Right cardiac atrium (tissue), 5 donors: ENCODE measurements at regions of chr4 and their contacts with region 1.

Region 1: DNA sequence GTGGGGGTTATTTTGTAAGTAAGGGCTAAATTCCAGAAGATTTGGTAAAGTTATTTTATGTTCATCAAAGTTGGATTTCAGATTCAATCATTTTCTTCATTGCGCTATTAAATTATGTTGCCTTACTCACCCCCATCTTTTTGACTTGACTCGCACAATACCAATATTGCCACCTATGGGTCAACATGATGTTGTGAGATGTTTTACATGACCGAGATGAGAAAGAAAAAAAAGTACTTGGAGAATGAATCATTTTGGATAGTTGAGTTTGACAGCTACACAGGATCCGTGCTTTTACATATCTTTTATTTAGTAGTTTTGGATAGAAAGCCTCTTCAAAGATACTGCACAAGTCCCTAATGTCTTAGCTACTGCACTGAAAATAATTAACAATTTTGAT is 224.2 kb upstream of the EMCN start:
- DNase-seq: no peak
- ATAC-seq: no peak
- H3K4me3 ChIP-seq: no peak overlapping the region
- H3K27ac ChIP-seq: no peak overlapping the region
- H3K4me1 ChIP-seq: no peaks in the 10 kb centered on the region
- H3K27me3 ChIP-seq: no peaks in the 10 kb centered on the region

Region 2: DNA sequence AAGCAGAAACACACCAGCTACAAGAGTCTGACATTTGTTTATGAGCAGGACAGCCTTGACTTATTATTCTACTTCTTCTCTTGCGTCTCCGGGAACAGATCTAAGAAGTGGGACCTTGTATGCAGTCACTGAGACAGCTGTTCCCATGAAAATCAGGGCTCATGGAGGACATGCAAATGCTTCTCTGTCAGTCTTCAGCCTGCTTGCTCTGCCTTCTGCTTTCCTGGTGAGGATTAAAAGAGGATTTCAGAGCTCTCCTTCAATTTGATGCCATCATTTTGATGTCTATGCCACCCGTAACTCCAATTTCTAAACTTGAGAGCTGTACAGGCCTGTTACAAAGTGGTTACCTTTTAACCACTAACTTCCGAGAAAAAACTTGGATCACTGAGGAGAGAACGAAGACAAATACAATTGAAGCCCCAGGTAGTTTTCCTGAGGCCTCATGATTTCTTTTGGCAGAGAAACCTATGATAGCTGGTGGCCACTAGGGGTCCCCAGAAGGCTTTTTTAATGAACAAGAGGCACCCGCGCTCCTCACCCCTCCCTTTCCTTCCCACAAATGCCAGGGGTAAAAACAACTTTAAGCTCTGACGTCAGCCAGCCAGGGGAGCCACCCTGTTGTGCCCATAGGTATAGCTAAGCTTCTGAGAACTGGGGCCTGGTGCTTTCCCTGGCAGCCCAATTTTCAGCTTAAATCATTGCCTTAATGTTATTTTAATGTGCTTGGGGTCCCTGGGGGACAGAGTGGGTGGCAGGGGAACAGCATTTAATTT is 648.8 kb before region 1 on chr4:
- intact Hi-C with region 1: loop called in 1 of 4 experiments (anchors 10 kb)
- DNase-seq: peak; percentile 83 to 91 (median 83)
- ATAC-seq: peak; percentile 91 to 95
- H3K4me3 ChIP-seq: no peak overlapping the region
- H3K27ac ChIP-seq: no peak overlapping the region
- H3K4me1 ChIP-seq: peaks cover 2% of the 10 kb centered on the region
- H3K27me3 ChIP-seq: no peaks in the 10 kb centered on the region

Region 3: DNA sequence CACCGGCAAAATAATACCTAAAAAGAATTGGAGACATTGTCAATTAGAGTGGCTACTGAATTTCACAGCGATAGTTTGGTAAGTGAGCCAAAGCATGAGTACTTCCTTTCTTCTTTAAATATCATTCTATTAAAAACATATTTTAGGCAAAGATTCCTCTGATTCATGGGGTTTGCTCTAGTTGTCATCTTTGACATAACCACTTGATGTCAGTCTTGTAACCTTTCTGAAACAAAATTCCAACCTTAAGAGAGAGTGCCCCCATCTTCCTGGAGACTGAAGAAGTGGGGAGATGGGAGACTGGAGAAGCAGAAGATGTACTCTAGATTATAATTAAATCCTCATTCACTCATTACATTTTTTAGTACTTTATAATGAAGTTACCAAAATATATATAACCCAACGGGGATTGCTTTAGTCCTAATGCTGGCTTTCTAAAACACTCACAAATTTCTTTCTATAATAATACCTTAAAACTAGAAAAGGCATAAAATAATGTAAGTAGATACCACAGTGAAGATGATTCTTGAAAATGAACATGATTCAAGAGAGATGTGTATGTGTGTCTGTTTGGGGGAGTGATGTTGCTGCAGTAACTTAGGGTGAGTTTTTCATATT is 320.6 kb before region 1 on chr4:
- intact Hi-C with region 1: loop called in 2 of 4 experiments (anchors 5 to 10 kb)
- DNase-seq: no peak
- ATAC-seq: peak; percentile 56 to 73
- H3K4me3 ChIP-seq: no peak overlapping the region
- H3K27ac ChIP-seq: no peak overlapping the region
- H3K4me1 ChIP-seq: no peaks in the 10 kb centered on the region
- H3K27me3 ChIP-seq: no peaks in the 10 kb centered on the region

Region 4: GRCh38 chr4:100517864-100518341 is 224.1 kb before region 1 on chr4 and contains the start of gene EMCN:
- intact Hi-C with region 1: loop called in 1 of 4 experiments (anchors 5 kb)
- DNase-seq: peak in 2 of 3 donors; percentile 21 to 31
- ATAC-seq: peak; percentile 93 to 97
- H3K4me3 ChIP-seq: peak within 1 kb of the TSS; percentile 83
- H3K27ac ChIP-seq: peak within 1 kb of the TSS; percentile 93
- H3K4me1 ChIP-seq: peaks cover 2% of the 10 kb centered on the region
- H3K27me3 ChIP-seq: no peaks in the 10 kb centered on the region
- total RNA-seq, gene EMCN: 33.7 to 44.9 (median 41.4) TPM